Motor neuron (in vitro differentiated cells): ENCODE measurements at regions of chr9 and their contacts with region 1.

Region 1: GRCh38 chr9:2132484-2133082 is 117.4 kb downstream of the SMARCA2 start:
- ATAC-seq: peak in 1 of 8 experiments; percentile 31
- H3K4me3 ChIP-seq: no peak overlapping the region
- H3K27ac ChIP-seq: no peak overlapping the region
- H3K4me1 ChIP-seq: no peaks in the 10 kb centered on the region

Region 2: DNA sequence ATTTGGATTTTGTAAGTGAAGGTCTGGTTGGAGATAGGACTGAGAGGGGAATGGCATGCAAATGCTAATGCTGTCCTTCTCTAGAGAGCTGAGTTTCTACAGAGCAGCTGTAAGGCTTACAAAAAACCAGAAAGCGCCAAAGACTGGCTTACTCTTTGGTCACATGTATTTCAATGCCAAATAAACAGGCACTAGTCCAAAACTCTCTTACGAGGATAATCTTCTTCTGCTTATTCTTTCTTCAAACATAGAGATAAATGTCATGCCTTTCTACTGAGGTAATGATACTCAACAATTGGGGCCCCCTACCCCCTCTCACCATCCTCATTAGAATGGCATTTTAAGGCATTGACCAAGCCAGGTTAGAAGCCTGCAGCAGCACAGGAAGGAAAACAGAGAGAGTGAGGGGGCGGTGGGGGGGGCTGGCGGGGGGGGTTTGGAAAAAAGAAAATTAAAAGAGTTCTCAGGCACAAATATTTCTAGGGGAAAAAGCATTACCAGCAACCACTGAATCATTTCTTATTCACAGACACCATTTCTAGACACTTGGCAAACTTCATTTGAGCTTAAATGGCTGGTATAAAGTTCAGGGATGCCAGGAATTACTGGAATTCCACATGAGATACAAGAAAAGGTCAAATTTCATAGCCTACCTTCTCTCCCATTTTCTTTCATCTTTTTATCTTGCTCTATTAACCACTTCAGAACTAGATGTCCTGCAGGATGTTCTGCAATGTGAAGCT is 677.3 kb after region 1 on chr9:
- in situ Hi-C with region 1: loop called in 1 of 9 experiments (anchors 25 kb)
- ATAC-seq: peak in 6 of 8 experiments; percentile 57 to 96 (median 88)
- H3K4me3 ChIP-seq: no peak overlapping the region
- H3K27ac ChIP-seq: no peak overlapping the region
- H3K4me1 ChIP-seq: peaks cover 0 to 5% of the 10 kb centered on the region in 2 donors